Activated CD4-positive, alpha-beta T cell treated with anti-CD3 and anti-CD28 coated beads for 36 hours (primary cell): ENCODE measurements at regions of chrX and their contacts with region 1.

Region 1: GRCh38 chrX:1178580-1179057 is 33.8 kb downstream of the CRLF2 start:
- DNase-seq: peak; percentile 31
- ATAC-seq: peak; percentile 18
- H3K4me3 Mint-ChIP-seq: no peak overlapping the region
- H3K27ac Mint-ChIP-seq: no peak overlapping the region
- H3K4me1 Mint-ChIP-seq: no peaks in the 10 kb centered on the region
- H3K27me3 Mint-ChIP-seq: no peaks in the 10 kb centered on the region

Region 2: DNA sequence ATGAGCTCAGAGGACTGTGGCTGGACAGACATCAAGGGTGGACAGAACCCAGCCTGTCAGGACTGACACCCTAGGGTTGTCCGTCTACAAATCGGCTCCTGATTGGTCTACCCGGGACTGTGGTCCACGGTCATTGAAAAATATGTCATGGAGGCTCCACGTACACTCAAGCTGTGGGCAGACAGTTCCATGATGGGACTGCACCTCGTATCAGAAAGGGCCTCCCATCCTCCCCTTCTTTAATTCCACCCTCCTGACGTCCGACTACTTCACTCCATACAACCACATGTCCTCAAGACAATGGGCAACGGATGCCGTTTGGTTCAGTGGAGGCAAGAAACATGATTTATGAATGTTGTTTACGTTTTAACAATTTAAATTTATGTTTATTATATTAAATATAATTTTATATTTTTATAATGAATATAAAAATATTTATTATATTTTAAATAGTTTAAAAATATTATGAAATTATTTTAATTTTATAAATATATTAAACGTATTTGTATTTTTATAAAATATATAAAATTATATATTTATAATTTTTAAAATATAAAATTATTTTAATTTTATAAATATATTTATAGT is 606.0 kb before region 1 on chrX:
- CTCF ChIA-PET with region 1: no interaction called
- POLR2A ChIA-PET with region 1: no interaction called
- intact Hi-C with region 1: loop called in 1 of 2 experiments (anchors 10 kb)
- DNase-seq: no peak
- ATAC-seq: peak; percentile 24
- H3K4me3 Mint-ChIP-seq: no peak overlapping the region
- H3K27ac Mint-ChIP-seq: no peak overlapping the region
- H3K4me1 Mint-ChIP-seq: no peaks in the 10 kb centered on the region
- H3K27me3 Mint-ChIP-seq: no peaks in the 10 kb centered on the region

Region 3: GRCh38 chrX:920234-920799 is 258.3 kb before region 1 on chrX:
- CTCF ChIA-PET with region 1: no interaction called
- POLR2A ChIA-PET with region 1: no interaction called
- intact Hi-C with region 1: loop called in 1 of 2 experiments (anchors 10 kb)
- DNase-seq: no peak
- ATAC-seq: no peak
- H3K4me3 Mint-ChIP-seq: no peak overlapping the region
- H3K27ac Mint-ChIP-seq: no peak overlapping the region
- H3K4me1 Mint-ChIP-seq: no peaks in the 10 kb centered on the region
- H3K27me3 Mint-ChIP-seq: no peaks in the 10 kb centered on the region